Common myeloid progenitor, CD34-positive (primary cell): ENCODE measurements at regions of chr3 and their contacts with region 1.

Region 1: DNA sequence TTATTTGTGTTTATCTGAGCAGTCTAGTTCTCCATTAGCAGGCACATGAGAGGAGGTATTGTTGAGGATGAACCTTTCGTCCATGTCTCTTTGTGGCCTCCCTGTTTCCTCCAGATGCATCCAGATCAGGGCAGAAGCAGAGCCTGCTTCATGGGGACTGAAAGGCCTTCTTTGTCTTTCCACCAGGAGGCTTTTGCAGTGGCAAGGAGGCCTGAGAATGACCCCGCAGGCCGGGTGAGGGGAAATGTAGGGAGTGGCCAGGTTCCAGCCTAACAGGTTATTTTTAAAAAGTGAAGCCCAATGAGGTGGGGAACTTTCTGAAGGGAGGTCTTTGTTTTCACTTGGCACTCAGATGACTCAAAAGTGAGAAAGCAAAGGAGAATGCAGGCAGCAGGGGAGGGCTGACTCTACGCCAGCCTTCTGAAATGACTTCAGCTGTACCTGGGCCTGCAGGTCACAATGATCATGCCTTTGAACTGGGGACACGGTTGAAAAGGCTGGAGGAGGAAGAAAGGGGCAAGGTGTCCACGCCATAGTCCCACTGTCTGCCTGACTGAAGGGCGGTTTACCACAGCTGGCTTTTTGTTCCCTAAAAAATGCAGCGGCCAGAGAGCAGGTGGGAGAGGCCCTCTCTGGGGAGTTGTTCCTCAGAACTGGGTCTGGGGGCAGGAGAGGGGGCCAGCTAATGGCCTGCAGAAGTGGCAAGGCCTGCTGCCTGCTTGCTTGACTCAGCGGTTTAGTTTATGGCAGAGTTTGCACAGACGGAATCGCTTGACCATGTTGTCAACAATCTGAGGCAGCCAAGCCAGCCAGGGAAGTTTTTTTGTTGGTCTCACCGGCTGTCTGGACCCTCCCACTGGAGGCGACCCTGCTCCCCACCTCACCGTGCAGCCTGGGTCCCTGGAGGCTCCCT is 28.7 kb downstream of the CMTM7 start:
- DNase-seq: peak in 2 of 3 donors; percentile 79 to 84
- H3K4me3 ChIP-seq: peak overlapping the region in 5 of 7 experiments; percentile 13 to 49 (median 24)
- H3K27ac ChIP-seq: peak overlapping the region; percentile 42 to 79
- H3K4me1 ChIP-seq: peaks cover 29 to 82% (median 59%) of the 10 kb centered on the region in 4 experiments
- H3K27me3 ChIP-seq: no peaks in the 10 kb centered on the region

Region 2: DNA sequence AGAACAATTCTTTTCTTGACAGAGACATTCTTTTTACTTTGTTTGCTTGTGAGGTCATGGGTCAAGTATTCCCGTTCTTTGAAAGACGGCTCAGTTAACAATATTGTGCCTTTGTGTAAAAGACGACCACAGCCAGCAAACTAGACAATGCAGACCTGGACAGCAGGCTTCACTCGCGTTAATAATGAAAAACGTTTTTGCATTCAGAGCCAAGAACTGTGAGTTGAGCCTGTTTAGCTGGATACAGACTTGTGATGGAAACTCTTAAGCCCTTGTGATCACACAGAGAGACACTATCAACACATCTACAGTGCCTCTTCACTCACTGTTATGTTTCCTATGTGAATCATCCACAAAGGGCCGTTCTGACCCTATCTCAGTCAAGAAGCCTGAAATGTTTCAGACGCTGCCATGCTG is 66.0 kb before region 1 on chr3:
- CTCF ChIA-PET with region 1: no interaction called
- POLR2A ChIA-PET with region 1: no interaction called
- DNase-seq: no peak
- H3K4me3 ChIP-seq: no peak overlapping the region
- H3K27ac ChIP-seq: no peak overlapping the region
- H3K4me1 ChIP-seq: no peaks in the 10 kb centered on the region
- H3K27me3 ChIP-seq: no peaks in the 10 kb centered on the region

Region 3: GRCh38 chr3:32401556-32402081 is 18.8 kb before region 1 on chr3:
- CTCF ChIA-PET with region 1: interaction called, 27 read pairs
- POLR2A ChIA-PET with region 1: interaction called, 4 read pairs
- DNase-seq: peak; percentile 80 to 98 (median 97)
- H3K4me3 ChIP-seq: peak overlapping the region in 5 of 7 experiments; percentile 23 to 69 (median 64)
- H3K27ac ChIP-seq: peak overlapping the region; percentile 84 to 91
- H3K4me1 ChIP-seq: peaks cover 25 to 90% (median 64%) of the 10 kb centered on the region in 4 experiments
- H3K27me3 ChIP-seq: no peaks in the 10 kb centered on the region

Region 4: DNA sequence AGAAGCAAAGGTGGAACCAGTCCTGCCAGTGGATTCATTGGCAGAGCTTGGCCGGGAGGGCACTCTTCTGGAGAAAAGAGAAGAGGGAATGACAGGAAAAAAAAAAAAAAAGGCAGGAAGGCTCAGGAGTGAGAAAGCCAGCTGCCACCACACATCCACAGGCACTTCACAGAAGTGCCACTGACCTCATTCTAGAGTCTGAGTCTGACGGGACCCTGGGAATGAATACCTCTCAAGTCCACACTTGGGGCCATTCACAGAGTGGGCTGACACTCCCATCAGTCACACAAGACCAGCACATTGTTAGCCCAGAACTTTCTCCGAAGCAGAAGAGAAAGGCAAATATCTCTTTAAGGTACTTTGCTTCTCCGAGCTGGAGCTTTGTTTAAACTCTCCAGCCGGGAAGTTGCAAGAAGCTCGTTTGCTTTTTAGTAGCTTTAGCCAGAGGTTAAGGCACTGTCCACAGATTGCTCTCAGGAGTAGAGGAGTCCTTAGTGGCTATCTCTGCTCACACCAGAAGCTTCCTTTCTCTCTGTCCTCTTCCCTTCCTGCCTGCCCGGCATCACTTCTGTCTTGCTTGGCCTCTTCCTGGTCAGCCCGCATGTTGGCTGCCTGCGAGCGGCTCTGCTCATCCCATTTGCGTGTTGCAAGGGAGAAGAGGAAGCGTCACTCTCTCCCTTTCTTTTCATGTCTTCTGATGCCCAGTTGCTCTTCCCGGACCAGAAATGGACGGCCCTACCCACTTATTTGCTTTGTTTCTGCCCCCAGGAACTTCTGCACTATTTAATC is 28.5 kb after region 1 on chr3:
- CTCF ChIA-PET with region 1: interaction called, 13 read pairs
- POLR2A ChIA-PET with region 1: no interaction called
- DNase-seq: no peak
- H3K4me3 ChIP-seq: no peak overlapping the region
- H3K27ac ChIP-seq: no peak overlapping the region
- H3K4me1 ChIP-seq: no peaks in the 10 kb centered on the region
- H3K27me3 ChIP-seq: no peaks in the 10 kb centered on the region

Region 5: DNA sequence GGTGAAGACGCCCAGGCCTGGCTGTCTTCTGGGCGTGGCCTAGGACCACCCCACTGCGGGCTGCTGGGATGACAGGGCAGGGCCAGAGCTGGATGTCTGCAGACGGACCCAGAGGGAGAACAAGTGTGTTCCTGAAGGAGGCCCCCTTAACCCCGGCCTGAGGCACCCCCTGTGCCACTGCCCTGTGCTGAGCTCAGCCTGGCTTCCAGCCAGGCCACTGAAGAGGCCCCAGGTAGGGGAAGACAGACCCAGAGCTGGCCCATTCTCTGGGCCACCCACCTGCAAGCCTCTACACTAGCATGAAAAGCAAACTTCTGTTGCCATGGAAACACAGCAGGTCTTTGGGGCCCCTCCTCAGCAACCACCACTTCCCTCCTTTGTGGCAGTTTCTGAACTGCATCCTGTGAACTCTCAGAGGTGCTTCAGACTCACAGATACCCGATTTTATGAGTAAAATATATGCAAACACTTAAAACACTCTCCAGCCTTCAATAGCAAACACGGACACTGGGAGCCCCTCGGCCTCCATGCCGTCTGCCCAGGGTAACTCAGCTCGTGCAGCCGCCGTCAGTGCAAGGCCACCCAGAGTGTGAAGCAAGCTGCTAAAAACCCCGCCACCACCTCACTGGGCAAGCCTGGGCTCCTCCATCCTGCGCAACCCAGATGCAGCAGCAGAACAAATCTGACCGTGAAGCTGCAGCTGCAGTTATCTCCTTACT is 39.8 kb after region 1 on chr3:
- CTCF ChIA-PET with region 1: interaction called, 17 read pairs
- POLR2A ChIA-PET with region 1: interaction called, 3 read pairs
- DNase-seq: peak; percentile 82 to 97 (median 96)
- H3K4me3 ChIP-seq: peak overlapping the region in 3 of 7 experiments; percentile 12 to 61 (median 47)
- H3K27ac ChIP-seq: peak overlapping the region; percentile 40 to 87
- H3K4me1 ChIP-seq: peaks cover 4 to 49% (median 34%) of the 10 kb centered on the region in 4 experiments
- H3K27me3 ChIP-seq: no peaks in the 10 kb centered on the region